Right ventricle myocardium superior (tissue), 1 donor: ENCODE measurements at regions of chr9 and their contacts with region 1.

Region 1: GRCh38 chr9:96383165-96383942 is at the start of gene SLC35D2:
- DNase-seq: peak; percentile 84
- ATAC-seq: peak; percentile 91
- total RNA-seq, gene SLC35D2: 13.5 TPM

Region 2: GRCh38 chr9:96302021-96302420 is 81.3 kb before region 1 on chr9 and contains the start of gene HSD17B3:
- intact Hi-C with region 1: no loop called
- DNase-seq: no peak
- ATAC-seq: no peak
- total RNA-seq, gene HSD17B3: 1.3 TPM

Region 3: GRCh38 chr9:96418074-96418809 is 34.9 kb after region 1 on chr9 and contains the start of gene ZNF367:
- intact Hi-C with region 1: loop called (anchors 5 kb)
- DNase-seq: peak; percentile 99
- ATAC-seq: peak; percentile 86
- total RNA-seq, gene ZNF367: 4.3 TPM

Region 4: GRCh38 chr9:96523374-96523773 is 140.0 kb after region 1 on chr9:
- intact Hi-C with region 1: no loop called
- DNase-seq: peak; percentile 68
- ATAC-seq: peak; percentile 85